Body of pancreas (tissue), 4 donors: ENCODE measurements at regions of chr16 and their contacts with region 1.

Region 1: DNA sequence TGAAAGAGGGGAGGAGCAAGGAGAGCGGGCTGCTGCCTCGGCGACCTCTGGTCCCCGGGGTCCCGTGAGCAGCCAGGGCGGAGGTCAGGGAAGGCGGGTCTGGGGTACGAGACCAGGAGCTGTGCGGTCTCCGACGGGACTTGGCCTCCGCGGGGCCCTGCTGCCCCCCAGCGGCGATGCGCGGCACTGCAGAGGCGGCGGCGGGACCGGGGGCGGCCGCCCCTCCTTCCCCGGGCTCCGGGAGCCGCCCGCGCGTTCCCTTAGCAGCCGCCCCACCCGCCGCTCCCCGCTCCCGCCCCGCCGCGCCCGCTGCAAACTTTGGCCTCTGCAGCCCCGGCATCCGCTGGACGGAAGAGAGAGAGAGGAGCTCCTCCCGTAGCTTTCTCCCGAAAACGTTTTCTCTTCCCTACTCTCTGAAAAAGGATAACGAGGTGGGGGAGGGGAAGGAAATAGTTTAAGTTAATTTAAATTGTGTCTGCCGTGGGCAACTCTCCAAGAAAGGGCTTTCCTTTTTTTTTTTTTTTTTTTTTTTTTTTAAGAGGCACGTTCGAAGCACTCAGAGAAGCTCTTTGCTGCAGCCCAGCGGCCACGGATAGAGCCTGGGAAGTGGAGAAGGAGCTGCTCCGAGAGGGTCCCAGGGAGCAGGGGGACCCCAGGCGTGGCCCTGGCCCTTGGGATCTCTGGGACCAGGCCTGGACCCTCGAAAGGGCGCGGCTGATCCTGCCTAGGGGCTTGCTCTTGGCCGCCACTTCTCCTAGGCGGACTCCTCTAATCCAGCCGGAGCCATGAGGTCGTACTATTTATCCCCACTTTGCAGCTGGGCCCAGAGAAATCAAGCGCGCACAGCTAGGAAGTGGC is 43.2 kb downstream of the C16orf82 start:
- DNase-seq: peak; percentile 44 to 63 (median 55)
- ATAC-seq: peak; percentile 70
- H3K4me3 ChIP-seq: no peak overlapping the region
- H3K27ac ChIP-seq: no peak overlapping the region
- H3K4me1 ChIP-seq: peaks cover 8% of the 10 kb centered on the region
- H3K27me3 ChIP-seq: peaks cover 0 to 4% of the 10 kb centered on the region in 2 donors
- CTCF ChIP-seq: peak; percentile 52 to 98 (median 71)
- POLR2A ChIP-seq: no peak

Region 2: DNA sequence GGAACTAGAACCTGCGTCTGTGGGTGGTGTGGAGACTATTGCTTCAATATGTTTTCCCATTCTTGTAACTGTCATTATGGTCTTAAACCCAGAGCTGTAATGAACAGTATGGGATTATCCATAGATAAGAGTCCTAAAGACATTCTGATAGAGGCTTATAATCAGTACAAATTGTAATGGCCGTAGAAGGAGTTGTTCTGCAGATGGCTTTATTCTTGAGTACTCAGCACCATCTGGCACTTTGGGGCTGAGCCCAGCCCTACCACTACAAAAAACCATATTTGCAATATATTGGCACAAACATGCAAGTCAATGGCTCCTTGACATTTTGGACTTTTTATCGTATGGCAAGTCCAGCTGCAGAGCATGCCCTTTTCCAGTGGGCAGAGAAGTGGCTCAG is 1268.1 kb before region 1 on chr16:
- intact Hi-C with region 1: loop called (anchors 10 kb)
- DNase-seq: no peak
- ATAC-seq: no peak
- H3K4me3 ChIP-seq: no peak overlapping the region
- H3K27ac ChIP-seq: no peak overlapping the region
- H3K4me1 ChIP-seq: no peaks in the 10 kb centered on the region
- H3K27me3 ChIP-seq: no peaks in the 10 kb centered on the region
- CTCF ChIP-seq: no peak
- POLR2A ChIP-seq: no peak

Region 3: GRCh38 chr16:26672206-26672605 is 437.7 kb before region 1 on chr16:
- intact Hi-C with region 1: no loop called
- DNase-seq: no peak
- ATAC-seq: no peak
- H3K4me3 ChIP-seq: no peak overlapping the region
- H3K27ac ChIP-seq: no peak overlapping the region
- H3K4me1 ChIP-seq: no peaks in the 10 kb centered on the region
- H3K27me3 ChIP-seq: no peaks in the 10 kb centered on the region
- CTCF ChIP-seq: no peak
- POLR2A ChIP-seq: no peak

Region 4: GRCh38 chr16:26981266-26981938 is 128.5 kb before region 1 on chr16:
- intact Hi-C with region 1: no loop called
- DNase-seq: no peak
- ATAC-seq: no peak
- H3K4me3 ChIP-seq: no peak overlapping the region
- H3K27ac ChIP-seq: no peak overlapping the region
- H3K4me1 ChIP-seq: no peaks in the 10 kb centered on the region
- H3K27me3 ChIP-seq: no peaks in the 10 kb centered on the region
- CTCF ChIP-seq: no peak
- POLR2A ChIP-seq: no peak

Region 5: DNA sequence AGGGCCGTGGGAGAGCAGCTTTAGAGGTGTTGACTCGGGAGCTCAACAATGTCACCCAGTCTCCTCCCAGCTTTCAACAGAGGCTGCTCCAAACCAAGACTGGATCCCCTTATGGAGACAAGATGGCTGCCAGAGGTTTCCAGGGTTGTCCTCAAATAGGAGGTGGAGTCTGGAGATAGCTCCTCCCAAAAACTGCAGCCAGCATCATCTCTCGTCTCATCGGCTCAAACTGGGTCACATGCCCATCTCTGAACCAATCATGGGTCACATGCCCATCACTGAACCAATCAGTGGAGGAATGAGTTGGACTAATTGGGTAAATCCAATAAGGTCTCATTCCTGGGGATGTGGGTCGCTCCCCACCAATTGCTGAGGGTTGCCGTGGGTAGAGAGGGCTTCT is 84.3 kb before region 1 on chr16:
- intact Hi-C with region 1: no loop called
- DNase-seq: no peak
- ATAC-seq: no peak
- H3K4me3 ChIP-seq: no peak overlapping the region
- H3K27ac ChIP-seq: no peak overlapping the region
- H3K4me1 ChIP-seq: no peaks in the 10 kb centered on the region
- H3K27me3 ChIP-seq: no peaks in the 10 kb centered on the region
- CTCF ChIP-seq: no peak
- POLR2A ChIP-seq: no peak